Activated CD4-positive, alpha-beta T cell treated with anti-CD3 and anti-CD28 coated beads, Interleukin-2, amount 10 ng/mL, durations not matched to agents 24 days and 14 days (primary cell): ENCODE measurements at regions of chr10 and their contacts with region 1.

Region 1: DNA sequence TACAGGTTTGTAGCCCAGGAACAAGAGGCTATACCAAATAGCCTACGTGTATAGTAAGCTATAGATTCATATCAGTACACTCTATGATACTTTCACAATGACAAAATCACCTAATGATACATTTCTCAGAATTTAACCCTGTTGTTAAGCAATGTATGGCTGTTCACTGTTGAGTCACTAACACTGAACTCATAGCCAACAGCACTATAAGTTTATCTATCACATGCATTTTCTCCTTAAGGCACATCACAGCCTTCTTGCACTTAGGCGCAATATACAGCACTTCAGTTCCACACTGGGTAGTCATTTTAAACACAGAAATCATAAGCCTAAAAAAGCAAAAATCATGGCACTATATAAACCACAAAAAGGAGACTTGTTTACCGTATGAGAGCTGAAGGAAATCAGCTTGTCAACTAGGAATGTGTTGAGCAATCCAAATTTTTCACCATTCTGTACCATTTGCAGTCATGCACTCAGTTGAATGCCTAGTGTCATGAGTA is 45.6 kb downstream of the ZNF438 start:
- DNase-seq: peak; percentile 66
- H3K4me3 Mint-ChIP-seq: peak overlapping the region; percentile 48
- H3K27ac Mint-ChIP-seq: peak overlapping the region; percentile 92
- H3K4me1 Mint-ChIP-seq: peaks cover 17% of the 10 kb centered on the region
- H3K27me3 Mint-ChIP-seq: no peaks in the 10 kb centered on the region

Region 2: GRCh38 chr10:30701451-30702173 is 284.5 kb before region 1 on chr10:
- intact Hi-C with region 1: loop called (anchors 1 kb)
- DNase-seq: peak; percentile 92
- H3K4me3 Mint-ChIP-seq: peak overlapping the region; percentile 76
- H3K27ac Mint-ChIP-seq: peak overlapping the region; percentile 95
- H3K4me1 Mint-ChIP-seq: peaks cover 78% of the 10 kb centered on the region
- H3K27me3 Mint-ChIP-seq: no peaks in the 10 kb centered on the region

Region 3: DNA sequence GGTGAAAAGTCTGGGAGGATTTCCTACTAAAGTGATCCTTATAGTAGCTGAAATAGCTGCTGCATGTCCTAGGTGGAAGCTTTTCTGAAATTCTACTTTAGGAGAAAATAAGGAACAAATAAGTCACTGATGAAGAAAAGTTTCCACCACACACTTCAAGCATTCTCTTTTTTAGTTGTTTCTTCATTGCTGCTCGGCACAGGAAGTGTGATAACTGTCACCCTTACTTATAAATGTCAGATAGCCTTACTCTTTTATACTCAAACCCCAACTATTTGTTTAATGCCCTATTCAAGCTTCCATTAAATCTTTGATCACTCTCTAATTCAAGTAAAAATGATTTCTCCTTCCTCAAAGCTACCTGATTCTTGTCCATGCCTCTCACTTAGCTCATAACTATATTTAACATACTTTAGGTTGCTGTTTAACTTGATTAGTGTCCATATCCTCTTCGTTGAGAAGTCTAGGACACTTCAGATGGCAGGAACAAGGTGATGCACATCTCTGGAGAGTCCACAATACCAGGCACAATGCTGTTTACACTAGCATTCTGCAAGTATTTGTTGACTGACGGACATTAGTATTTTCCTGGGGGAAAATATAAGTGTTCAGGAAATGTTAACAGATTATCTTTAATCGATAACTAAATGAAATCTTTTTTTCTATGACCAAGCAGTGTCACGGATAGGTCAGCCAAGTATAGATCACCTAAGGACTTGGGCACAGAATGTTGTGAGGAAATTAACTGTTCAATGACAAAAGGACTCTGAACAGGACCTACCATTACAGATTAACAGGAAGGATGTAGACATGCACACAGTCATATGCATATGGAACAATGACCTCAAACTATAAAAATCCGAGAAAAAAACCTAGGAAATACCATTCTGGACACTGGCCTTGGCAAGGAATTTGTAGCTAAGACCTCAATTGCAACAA is 21.8 kb before region 1 on chr10:
- intact Hi-C with region 1: loop called (anchors 1 kb)
- DNase-seq: no peak
- H3K4me3 Mint-ChIP-seq: peak overlapping the region; percentile 6
- H3K27ac Mint-ChIP-seq: peak overlapping the region; percentile 78
- H3K4me1 Mint-ChIP-seq: peaks cover 17% of the 10 kb centered on the region
- H3K27me3 Mint-ChIP-seq: no peaks in the 10 kb centered on the region

Region 4: GRCh38 chr10:30999070-30999712 is 13.1 kb after region 1 on chr10:
- intact Hi-C with region 1: loop called (anchors 1 kb)
- DNase-seq: peak; percentile 61
- H3K4me3 Mint-ChIP-seq: peak overlapping the region; percentile 75
- H3K27ac Mint-ChIP-seq: peak overlapping the region; percentile 94
- H3K4me1 Mint-ChIP-seq: peaks cover 40% of the 10 kb centered on the region
- H3K27me3 Mint-ChIP-seq: no peaks in the 10 kb centered on the region

Region 5: GRCh38 chr10:31005895-31006294 is 19.8 kb after region 1 on chr10:
- intact Hi-C with region 1: loop called (anchors 2 kb)
- DNase-seq: no peak
- H3K4me3 Mint-ChIP-seq: no peak overlapping the region
- H3K27ac Mint-ChIP-seq: no peak overlapping the region
- H3K4me1 Mint-ChIP-seq: peaks cover 30% of the 10 kb centered on the region
- H3K27me3 Mint-ChIP-seq: no peaks in the 10 kb centered on the region

Region 6: DNA sequence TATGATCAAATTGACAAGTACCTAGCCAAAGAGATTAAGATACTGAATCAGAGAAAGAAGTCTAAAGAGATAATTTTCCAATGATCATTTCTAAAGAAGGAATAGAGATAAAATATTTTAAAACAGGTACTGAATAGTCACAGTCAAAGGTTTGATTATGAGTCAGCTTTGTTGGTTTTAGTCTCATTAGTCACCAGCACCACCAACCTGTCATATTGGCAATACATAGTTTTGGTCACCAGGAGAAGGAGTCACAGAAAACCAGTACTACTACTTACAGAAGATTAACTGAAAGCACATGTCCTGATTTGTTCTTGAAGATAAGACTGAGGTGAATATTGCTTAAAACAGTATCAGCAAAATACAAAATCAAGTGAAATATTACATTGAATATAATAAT is 367.5 kb after region 1 on chr10:
- intact Hi-C with region 1: loop called (anchors 5 kb)
- DNase-seq: peak; percentile 67
- H3K4me3 Mint-ChIP-seq: peak overlapping the region; percentile 25
- H3K27ac Mint-ChIP-seq: peak overlapping the region; percentile 80
- H3K4me1 Mint-ChIP-seq: peaks cover 39% of the 10 kb centered on the region
- H3K27me3 Mint-ChIP-seq: no peaks in the 10 kb centered on the region